Mammary epithelial cell (primary cell): ENCODE measurements at regions of chr20 and their contacts with region 1.

Region 1: GRCh38 chr20:11204926-11205768 is 531.3 kb upstream of the JAG1 start:
- DNase-seq: peak; percentile 69
- H3K4me3 ChIP-seq: no peak overlapping the region
- H3K27ac ChIP-seq: peak overlapping the region; percentile 65
- H3K4me1 ChIP-seq: peaks cover 46% of the 10 kb centered on the region
- H3K27me3 ChIP-seq: no peaks in the 10 kb centered on the region
- CTCF ChIP-seq: peak; percentile 84 to 95

Region 2: GRCh38 chr20:10558635-10559187 is 646.4 kb before region 1 on chr20:
- CTCF ChIA-PET with region 1: no interaction called
- dilution Hi-C with region 1: no loop called
- in situ Hi-C with region 1: no loop called
- intact Hi-C with region 1: loop called (anchors 5 kb)
- DNase-seq: peak; percentile 97
- H3K4me3 ChIP-seq: no peak overlapping the region
- H3K27ac ChIP-seq: peak overlapping the region; percentile 75
- H3K4me1 ChIP-seq: peaks cover 45% of the 10 kb centered on the region
- H3K27me3 ChIP-seq: no peaks in the 10 kb centered on the region
- CTCF ChIP-seq: no peak

Region 3: DNA sequence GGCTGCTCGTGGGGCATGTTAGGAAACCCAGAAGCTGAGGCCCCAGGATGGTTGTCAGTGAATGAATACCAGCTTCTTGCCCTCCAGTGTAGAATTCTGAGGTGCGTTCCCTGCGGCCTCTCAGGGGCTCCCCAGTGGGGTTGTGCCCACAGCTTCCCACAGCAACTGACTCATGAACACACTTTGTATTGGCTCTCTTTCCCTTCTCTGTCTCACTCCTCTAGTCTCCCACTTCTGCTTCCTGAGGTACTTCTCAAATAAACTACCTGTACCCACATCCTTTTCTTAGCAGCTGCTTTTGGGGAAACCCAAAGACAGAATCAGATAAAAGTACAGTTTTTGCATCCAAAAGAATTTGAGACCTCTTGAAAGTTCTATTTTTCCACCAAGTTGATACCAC is 423.6 kb before region 1 on chr20:
- CTCF ChIA-PET with region 1: no interaction called
- dilution Hi-C with region 1: no loop called
- in situ Hi-C with region 1: no loop called
- intact Hi-C with region 1: no loop called
- DNase-seq: no peak
- H3K4me3 ChIP-seq: no peak overlapping the region
- H3K27ac ChIP-seq: no peak overlapping the region
- H3K4me1 ChIP-seq: peaks cover 9% of the 10 kb centered on the region
- H3K27me3 ChIP-seq: no peaks in the 10 kb centered on the region
- CTCF ChIP-seq: no peak

Region 4: GRCh38 chr20:11098888-11099287 is 106.3 kb before region 1 on chr20:
- CTCF ChIA-PET with region 1: no interaction called
- dilution Hi-C with region 1: no loop called
- in situ Hi-C with region 1: no loop called
- intact Hi-C with region 1: loop called (anchors 5 kb)
- DNase-seq: peak; percentile 28
- H3K4me3 ChIP-seq: no peak overlapping the region
- H3K27ac ChIP-seq: no peak overlapping the region
- H3K4me1 ChIP-seq: peaks cover 4% of the 10 kb centered on the region
- H3K27me3 ChIP-seq: no peaks in the 10 kb centered on the region
- CTCF ChIP-seq: peak in 1 of 2 donors; percentile 55

Region 5: GRCh38 chr20:11140359-11140758 is 64.8 kb before region 1 on chr20:
- CTCF ChIA-PET with region 1: interaction called, 4 read pairs
- dilution Hi-C with region 1: no loop called
- in situ Hi-C with region 1: no loop called
- intact Hi-C with region 1: loop called (anchors 1 kb)
- DNase-seq: peak; percentile 98
- H3K4me3 ChIP-seq: no peak overlapping the region
- H3K27ac ChIP-seq: peak overlapping the region; percentile 74
- H3K4me1 ChIP-seq: peaks cover 21% of the 10 kb centered on the region
- H3K27me3 ChIP-seq: no peaks in the 10 kb centered on the region
- CTCF ChIP-seq: peak in 1 of 2 donors; percentile 42

Region 6: GRCh38 chr20:11267131-11267761 is 62.1 kb after region 1 on chr20:
- CTCF ChIA-PET with region 1: no interaction called
- dilution Hi-C with region 1: loop called (anchors 5 kb)
- in situ Hi-C with region 1: no loop called
- intact Hi-C with region 1: loop called (anchors 2 kb)
- DNase-seq: peak; percentile 99
- H3K4me3 ChIP-seq: no peak overlapping the region
- H3K27ac ChIP-seq: peak overlapping the region; percentile 59
- H3K4me1 ChIP-seq: peaks cover 23% of the 10 kb centered on the region
- H3K27me3 ChIP-seq: no peaks in the 10 kb centered on the region
- CTCF ChIP-seq: peak in 1 of 2 donors; percentile 17

Region 7: DNA sequence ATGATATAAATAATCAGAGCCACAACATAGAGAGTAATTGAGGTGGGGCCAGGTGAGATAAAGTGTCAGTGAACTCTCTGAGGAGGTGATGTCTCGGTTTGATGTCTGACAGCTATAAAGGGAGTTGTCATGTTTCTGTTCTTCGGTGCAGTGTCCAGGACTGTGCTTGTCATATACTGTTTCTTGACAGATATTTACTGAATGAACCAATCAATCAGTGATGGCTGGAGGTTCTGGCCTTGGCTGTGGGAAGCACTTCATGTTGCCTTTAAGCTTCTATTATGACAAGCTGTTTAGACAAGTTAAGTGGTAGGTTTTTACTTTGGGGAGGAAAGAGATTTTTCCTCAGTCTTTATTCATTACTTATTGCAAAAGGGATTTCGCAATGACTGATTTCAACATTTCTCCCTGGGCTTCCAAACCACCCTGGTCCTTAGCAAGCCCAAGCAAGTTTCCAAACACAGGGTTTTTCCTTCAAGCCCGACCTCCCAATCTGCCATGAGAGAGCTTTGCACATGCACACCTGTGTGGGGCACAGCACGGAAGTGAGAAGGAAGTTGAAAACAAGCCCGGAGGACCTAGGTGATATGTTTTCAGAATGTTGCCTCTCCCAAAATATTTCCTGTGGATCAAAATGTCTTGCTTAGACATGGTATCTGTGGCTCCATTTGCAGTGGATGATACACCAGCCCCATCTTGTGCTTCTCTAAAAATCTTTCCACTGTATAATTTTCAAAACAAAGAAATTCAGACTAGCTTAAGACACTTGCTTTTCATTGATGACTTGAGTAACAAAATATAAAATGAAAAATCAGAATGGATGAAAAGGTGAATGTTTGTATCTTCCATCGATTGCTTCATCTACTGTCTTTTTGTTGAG is 145.2 kb after region 1 on chr20:
- CTCF ChIA-PET with region 1: no interaction called
- dilution Hi-C with region 1: no loop called
- in situ Hi-C with region 1: no loop called
- intact Hi-C with region 1: loop called (anchors 5 kb)
- DNase-seq: peak; percentile 98
- H3K4me3 ChIP-seq: no peak overlapping the region
- H3K27ac ChIP-seq: peak overlapping the region; percentile 59
- H3K4me1 ChIP-seq: peaks cover 25% of the 10 kb centered on the region
- H3K27me3 ChIP-seq: no peaks in the 10 kb centered on the region
- CTCF ChIP-seq: peak; percentile 28 to 59

Region 8: DNA sequence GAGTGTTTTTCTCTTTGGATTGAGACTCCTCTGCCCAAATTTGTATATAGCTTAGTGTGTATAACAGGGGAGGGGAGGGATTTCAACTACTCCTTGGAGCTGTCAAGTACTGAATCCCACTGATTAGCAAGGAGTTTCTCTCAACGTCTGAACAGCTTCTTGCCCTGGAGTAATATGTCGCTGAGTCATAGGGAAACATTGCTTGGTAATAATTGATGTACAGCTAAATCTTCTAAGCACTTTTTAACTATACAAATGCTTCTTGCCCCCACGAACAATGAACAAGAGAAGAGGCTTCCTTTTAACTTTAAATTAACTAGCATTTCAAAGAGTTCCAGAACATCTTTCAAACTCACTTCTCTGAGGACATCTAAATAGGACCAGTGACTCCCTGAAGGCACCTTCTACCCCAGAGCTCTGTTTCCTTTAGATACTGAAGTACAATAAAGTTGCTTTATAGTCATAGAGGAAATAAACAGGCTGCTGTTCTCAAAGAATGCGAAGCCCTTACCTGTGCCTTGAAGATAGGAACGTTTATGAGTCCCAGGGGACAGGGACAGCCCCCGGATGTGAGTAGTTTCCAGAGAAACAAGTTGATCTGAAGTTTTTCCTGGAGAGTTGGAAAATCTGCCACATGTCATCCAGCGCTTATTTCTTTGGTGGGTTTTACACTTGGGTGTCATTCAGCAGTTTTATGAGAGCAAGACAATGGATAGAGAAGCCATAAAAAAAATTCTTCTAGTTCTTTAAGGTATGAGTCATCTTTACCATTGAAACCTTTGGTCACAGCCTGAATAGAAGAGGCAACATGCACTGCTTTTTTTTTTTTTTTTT is 250.0 kb after region 1 on chr20:
- CTCF ChIA-PET with region 1: no interaction called
- dilution Hi-C with region 1: no loop called
- in situ Hi-C with region 1: no loop called
- intact Hi-C with region 1: loop called (anchors 5 kb)
- DNase-seq: peak; percentile 86
- H3K4me3 ChIP-seq: peak overlapping the region; percentile 33 to 48 (median 37)
- H3K27ac ChIP-seq: peak overlapping the region; percentile 93
- H3K4me1 ChIP-seq: peaks cover 71% of the 10 kb centered on the region
- H3K27me3 ChIP-seq: no peaks in the 10 kb centered on the region
- CTCF ChIP-seq: no peak